HepG2 (cell line): ENCODE measurements at regions of chr1 and their contacts with region 1.

Region 1: DNA sequence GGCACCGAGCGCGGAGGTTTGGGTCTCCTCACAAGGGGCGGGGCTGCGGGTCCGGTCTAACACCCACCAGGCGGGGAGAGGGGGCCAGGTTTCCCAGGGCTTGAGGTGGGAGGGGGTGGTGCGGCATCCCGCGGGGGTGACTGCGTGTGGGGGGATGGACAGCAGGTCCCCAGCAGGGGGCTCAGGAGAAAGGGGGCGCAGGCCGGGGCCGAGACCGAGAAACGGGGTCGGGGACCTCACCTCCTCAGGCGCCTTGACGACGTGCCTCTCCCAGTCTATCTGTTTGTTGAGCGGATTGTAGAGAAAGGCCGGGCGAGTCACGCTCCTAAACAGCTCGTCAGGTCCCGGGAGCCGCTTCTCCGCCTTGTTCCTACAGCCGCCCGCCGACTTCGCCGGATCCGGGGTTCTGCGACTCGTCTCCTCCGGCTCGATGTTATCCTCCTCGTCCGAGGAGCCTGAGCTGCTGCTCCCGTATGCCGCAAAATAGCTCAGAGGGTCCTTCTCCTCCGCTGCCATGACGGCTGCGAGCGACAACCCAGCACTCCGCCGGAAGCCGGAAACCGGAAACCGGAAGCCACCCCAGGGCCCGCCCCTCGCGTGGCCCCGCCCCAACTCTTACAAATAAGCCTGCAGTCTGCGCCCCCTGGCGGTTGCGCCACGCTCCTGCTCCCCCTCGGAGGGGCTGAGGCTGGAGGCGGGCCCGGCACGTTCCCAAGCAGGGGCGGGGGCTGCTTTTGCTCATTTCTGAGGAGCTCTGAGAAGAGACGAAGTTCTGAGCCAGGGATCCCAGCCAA is at the start of gene C1orf52:
- DNase-seq: peak; percentile 78
- ATAC-seq: peak; percentile 97
- H3K4me3 ChIP-seq: peak within 1 kb of the TSS; percentile 93 to 100 (median 99)
- H3K27ac ChIP-seq: peak within 1 kb of the TSS; percentile 73
- H3K4me1 ChIP-seq: peaks cover 40% of the 10 kb centered on the region
- H3K27me3 ChIP-seq: no peaks in the 10 kb centered on the region; a peak in 1 of 5 replicates
- CTCF ChIP-seq: peak; percentile 92
- EP300 ChIP-seq: 0 out of 4 replicates have a peak, but pooled peaks of 1 of the 2 experiments have one; percentile 40
- POLR2A ChIP-seq: peak; percentile 87 to 91
- RAD21 ChIP-seq: peak; percentile 71
- total RNA-seq, gene C1orf52: 19.4 and 23.0 TPM in 2 replicates

Region 2: DNA sequence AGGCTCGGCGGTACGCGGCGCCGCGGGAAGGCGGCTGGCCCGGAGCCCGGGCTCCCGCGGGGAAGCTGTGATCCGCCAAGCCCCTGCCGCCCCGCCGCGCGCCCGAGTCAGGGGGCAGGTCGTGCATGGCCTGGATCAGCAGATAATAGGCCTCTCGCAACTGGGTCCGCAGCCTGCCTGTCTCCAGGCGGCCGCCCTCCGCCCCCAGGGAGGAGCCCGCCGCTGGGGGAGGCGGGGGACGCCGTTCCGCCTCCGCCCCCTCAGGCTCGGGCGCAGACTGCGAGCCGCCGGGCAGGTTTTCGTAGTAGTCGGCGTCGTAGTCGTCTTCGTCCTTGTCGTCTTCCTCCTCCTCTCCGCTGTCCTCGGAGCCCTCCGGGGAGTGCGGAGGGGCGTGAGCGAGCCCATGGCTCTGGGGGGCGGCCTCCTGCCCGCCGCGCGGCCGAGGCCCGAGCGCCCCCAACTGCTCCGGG is 58.4 kb before region 1 on chr1 and contains the start of gene SYDE2:
- CTCF ChIA-PET with region 1: no interaction called
- POLR2A ChIA-PET with region 1: no interaction called
- in situ Hi-C with region 1: no loop called
- intact Hi-C with region 1: loop called (anchors 2 kb)
- DNase-seq: peak; percentile 67
- ATAC-seq: peak; percentile 91
- H3K4me3 ChIP-seq: peak within 1 kb of the TSS; percentile 85 to 97 (median 85)
- H3K27ac ChIP-seq: peak within 1 kb of the TSS; percentile 86
- H3K4me1 ChIP-seq: peaks cover 28% of the 10 kb centered on the region
- H3K27me3 ChIP-seq: no peaks in the 10 kb centered on the region; a peak in 1 of 5 replicates
- CTCF ChIP-seq: no peak; the same call in 1 of the 2 replicates
- EP300 ChIP-seq: no peak
- POLR2A ChIP-seq: peak; percentile 59 to 67; a peak in 3 of 4 replicates
- RAD21 ChIP-seq: no peak
- total RNA-seq, gene SYDE2: 5.3 and 7.9 TPM in 2 replicates